CD4-positive, alpha-beta T cell (primary cell): ENCODE measurements at regions of chr2 and their contacts with region 1.

Region 1: DNA sequence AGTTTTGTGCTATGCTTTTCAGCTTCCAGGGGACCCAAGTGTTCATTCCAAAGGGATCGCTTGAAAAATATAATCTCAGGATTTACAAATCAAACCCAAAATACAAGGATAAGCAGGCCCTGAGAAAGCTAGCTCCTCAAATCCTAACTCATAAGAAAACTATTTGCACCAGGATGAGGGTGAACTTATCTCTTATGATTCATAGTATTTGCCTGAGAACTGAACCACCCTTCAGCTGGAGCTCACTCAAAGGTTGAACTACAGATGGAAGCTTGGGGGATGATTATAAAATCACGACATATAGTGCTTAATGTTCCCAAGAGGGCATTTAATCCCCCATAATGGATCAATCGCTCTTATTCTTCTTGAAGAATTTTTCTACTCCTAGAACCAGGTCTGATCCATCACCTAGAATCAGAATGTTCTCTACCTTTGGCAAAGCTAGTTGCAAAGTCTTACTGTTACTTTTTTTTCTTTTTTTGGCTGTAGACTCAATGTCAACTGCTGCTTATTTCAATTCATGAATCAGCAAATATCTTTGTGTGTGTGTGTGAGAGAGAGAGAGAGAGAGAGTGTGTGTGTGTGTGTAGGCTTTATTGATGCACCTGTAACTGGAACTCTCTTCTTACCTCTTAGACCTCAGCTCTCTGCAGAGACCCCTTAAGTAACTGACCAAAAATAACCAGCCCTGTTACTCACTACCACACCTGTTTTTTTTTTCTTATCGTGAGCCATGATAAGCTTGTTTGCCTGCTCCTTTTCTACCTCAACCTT is 44.8 kb downstream of the ARL4C start:
- DNase-seq: peak in 4 of 14 experiments; percentile 20 to 64 (median 54)
- ATAC-seq: peak; percentile 10
- H3K4me3 ChIP-seq: peak overlapping the region; percentile 64
- H3K4me3 Mint-ChIP-seq: peak overlapping the region; percentile 89
- H3K27ac ChIP-seq: peak overlapping the region; percentile 56 to 93
- H3K27ac Mint-ChIP-seq: peak overlapping the region; percentile 92
- H3K4me1 ChIP-seq: peaks cover 73% of the 10 kb centered on the region
- H3K4me1 Mint-ChIP-seq: peaks cover 89% of the 10 kb centered on the region
- H3K27me3 ChIP-seq: no peaks in the 10 kb centered on the region
- H3K27me3 Mint-ChIP-seq: peaks cover 5% of the 10 kb centered on the region
- CTCF ChIP-seq: no peak

Region 2: GRCh38 chr2:234368861-234369261 is 83.2 kb before region 1 on chr2:
- CTCF ChIA-PET with region 1: interaction called, 5 read pairs
- POLR2A ChIA-PET with region 1: interaction called, 12 read pairs
- intact Hi-C with region 1: loop called in 1 of 2 experiments (anchors 5 kb)
- DNase-seq: peak in 13 of 14 experiments; percentile 23 to 74 (median 50)
- ATAC-seq: peak; percentile 82
- H3K4me3 ChIP-seq: no peak overlapping the region
- H3K4me3 Mint-ChIP-seq: peak overlapping the region; percentile 50
- H3K27ac ChIP-seq: peak overlapping the region; percentile 47 to 57
- H3K27ac Mint-ChIP-seq: peak overlapping the region; percentile 88
- H3K4me1 ChIP-seq: peaks cover 65% of the 10 kb centered on the region
- H3K4me1 Mint-ChIP-seq: peaks cover 78% of the 10 kb centered on the region
- H3K27me3 ChIP-seq: no peaks in the 10 kb centered on the region
- H3K27me3 Mint-ChIP-seq: no peaks in the 10 kb centered on the region
- CTCF ChIP-seq: no peak

Region 3: DNA sequence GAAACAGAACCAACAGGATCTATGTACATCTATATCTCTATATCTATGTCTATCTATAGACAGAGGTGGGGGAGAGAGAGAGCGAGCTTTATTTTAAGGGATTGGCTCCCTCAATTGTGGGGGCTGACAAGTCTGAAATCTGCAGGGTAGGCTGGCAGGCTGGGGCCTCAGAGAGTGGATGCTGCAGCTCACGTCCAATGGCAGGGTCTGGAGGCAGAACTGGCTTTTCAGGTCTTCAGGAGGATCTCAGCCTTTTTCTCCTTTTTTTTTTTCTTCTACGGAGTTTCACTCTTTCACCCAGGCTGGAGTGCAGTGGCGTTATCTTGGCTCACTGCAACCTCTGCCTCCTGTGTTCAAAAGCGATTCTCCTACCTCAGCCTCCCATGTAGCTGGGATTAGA is 32.3 kb before region 1 on chr2:
- CTCF ChIA-PET with region 1: interaction called, 9 read pairs
- POLR2A ChIA-PET with region 1: interaction called, 376 read pairs
- intact Hi-C with region 1: loop called in 1 of 2 experiments (anchors 5 kb)
- DNase-seq: no peak
- ATAC-seq: no peak
- H3K4me3 ChIP-seq: no peak overlapping the region
- H3K4me3 Mint-ChIP-seq: no peak overlapping the region
- H3K27ac ChIP-seq: peak overlapping the region; percentile 32 to 33
- H3K27ac Mint-ChIP-seq: peak overlapping the region; percentile 97
- H3K4me1 ChIP-seq: peaks cover 58% of the 10 kb centered on the region
- H3K4me1 Mint-ChIP-seq: peaks cover 83% of the 10 kb centered on the region
- H3K27me3 ChIP-seq: no peaks in the 10 kb centered on the region
- H3K27me3 Mint-ChIP-seq: no peaks in the 10 kb centered on the region
- CTCF ChIP-seq: no peak

Region 4: DNA sequence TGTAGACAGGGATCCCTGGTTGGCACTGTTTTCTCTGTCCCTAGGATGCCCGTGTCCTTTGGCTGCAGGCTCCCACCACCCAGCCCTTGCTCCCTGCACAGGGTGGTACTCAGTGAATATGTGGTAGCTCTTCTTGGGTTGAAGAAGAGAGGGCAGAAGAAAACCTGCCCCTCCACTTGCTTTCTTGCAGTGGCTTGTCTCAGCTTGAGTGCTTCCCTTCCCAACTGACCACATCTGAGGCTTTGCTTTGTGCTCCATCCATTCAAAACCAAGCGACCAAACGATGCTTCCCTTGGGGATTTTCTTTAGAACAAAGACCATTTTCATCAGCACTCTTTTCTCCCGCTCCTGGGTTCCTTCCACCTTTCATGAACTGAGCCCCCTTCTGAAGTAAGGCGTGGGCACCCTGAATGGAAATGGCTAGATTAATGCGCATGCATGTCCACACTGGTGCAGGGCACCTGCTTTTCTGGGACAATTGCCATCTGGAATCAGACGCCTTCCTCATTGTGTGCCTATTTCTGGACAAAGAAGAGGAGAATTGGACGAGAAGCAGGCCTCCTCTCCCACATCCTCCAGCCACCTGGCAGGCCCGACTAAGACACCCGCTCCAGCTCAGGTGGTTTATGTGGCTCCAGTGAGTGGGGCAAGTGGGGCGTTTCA is 14.3 kb before region 1 on chr2:
- CTCF ChIA-PET with region 1: interaction called, 4 read pairs
- POLR2A ChIA-PET with region 1: interaction called, 42 read pairs
- intact Hi-C with region 1: no loop called
- DNase-seq: no peak
- ATAC-seq: peak; percentile 30
- H3K4me3 ChIP-seq: peak overlapping the region; percentile 6
- H3K4me3 Mint-ChIP-seq: peak overlapping the region; percentile 45
- H3K27ac ChIP-seq: peak overlapping the region; percentile 70 to 73
- H3K27ac Mint-ChIP-seq: peak overlapping the region; percentile 87
- H3K4me1 ChIP-seq: peaks cover 69% of the 10 kb centered on the region
- H3K4me1 Mint-ChIP-seq: peaks cover 89% of the 10 kb centered on the region
- H3K27me3 ChIP-seq: no peaks in the 10 kb centered on the region
- H3K27me3 Mint-ChIP-seq: no peaks in the 10 kb centered on the region
- CTCF ChIP-seq: no peak

Region 5: GRCh38 chr2:234478121-234478858 is 26.3 kb after region 1 on chr2:
- CTCF ChIA-PET with region 1: interaction called, 5 read pairs
- POLR2A ChIA-PET with region 1: interaction called, 64 read pairs
- intact Hi-C with region 1: no loop called
- DNase-seq: peak in 2 of 14 experiments; percentile 15 to 45
- ATAC-seq: peak; percentile 19
- H3K4me3 ChIP-seq: no peak overlapping the region
- H3K4me3 Mint-ChIP-seq: no peak overlapping the region
- H3K27ac ChIP-seq: no peak overlapping the region
- H3K27ac Mint-ChIP-seq: no peak overlapping the region
- H3K4me1 ChIP-seq: peaks cover 44% of the 10 kb centered on the region
- H3K4me1 Mint-ChIP-seq: peaks cover 74% of the 10 kb centered on the region
- H3K27me3 ChIP-seq: no peaks in the 10 kb centered on the region
- H3K27me3 Mint-ChIP-seq: no peaks in the 10 kb centered on the region
- CTCF ChIP-seq: no peak

Region 6: DNA sequence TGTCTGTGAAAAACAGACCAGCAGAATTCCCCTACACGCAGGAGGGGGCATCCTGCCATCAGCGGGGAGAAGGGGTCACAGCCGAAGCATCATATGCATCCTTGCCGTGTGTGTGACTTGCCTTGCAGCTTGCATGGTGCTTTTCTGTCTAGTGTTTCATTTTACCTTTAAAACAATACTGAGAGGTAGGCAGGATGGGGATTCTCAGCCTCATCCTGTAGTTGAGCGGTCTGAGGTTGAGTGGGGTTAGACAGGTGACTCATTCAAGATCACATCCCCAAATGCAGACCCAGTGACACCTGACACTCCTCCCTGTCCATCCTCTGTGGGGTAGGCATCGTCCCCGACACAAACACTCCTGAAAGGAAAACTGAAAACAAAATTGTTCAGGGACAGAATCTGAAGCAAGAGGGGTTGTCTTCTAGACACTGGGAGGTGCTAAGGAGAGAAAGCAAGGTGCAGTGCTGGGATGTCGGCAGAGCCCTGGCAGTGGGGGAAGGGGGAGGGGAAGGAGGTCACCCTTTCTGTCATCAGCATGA is 36.9 kb after region 1 on chr2:
- CTCF ChIA-PET with region 1: interaction called, 5 read pairs
- POLR2A ChIA-PET with region 1: interaction called, 265 read pairs
- intact Hi-C with region 1: loop called (anchors 1 to 2 kb)
- DNase-seq: peak; percentile 55 to 94 (median 69)
- ATAC-seq: peak; percentile 69
- H3K4me3 ChIP-seq: peak overlapping the region; percentile 94
- H3K4me3 Mint-ChIP-seq: peak overlapping the region; percentile 82
- H3K27ac ChIP-seq: peak overlapping the region; percentile 70 to 96
- H3K27ac Mint-ChIP-seq: peak overlapping the region; percentile 98
- H3K4me1 ChIP-seq: peaks cover 75% of the 10 kb centered on the region
- H3K4me1 Mint-ChIP-seq: peaks cover 92% of the 10 kb centered on the region
- H3K27me3 ChIP-seq: no peaks in the 10 kb centered on the region
- H3K27me3 Mint-ChIP-seq: no peaks in the 10 kb centered on the region
- CTCF ChIP-seq: no peak

Region 7: DNA sequence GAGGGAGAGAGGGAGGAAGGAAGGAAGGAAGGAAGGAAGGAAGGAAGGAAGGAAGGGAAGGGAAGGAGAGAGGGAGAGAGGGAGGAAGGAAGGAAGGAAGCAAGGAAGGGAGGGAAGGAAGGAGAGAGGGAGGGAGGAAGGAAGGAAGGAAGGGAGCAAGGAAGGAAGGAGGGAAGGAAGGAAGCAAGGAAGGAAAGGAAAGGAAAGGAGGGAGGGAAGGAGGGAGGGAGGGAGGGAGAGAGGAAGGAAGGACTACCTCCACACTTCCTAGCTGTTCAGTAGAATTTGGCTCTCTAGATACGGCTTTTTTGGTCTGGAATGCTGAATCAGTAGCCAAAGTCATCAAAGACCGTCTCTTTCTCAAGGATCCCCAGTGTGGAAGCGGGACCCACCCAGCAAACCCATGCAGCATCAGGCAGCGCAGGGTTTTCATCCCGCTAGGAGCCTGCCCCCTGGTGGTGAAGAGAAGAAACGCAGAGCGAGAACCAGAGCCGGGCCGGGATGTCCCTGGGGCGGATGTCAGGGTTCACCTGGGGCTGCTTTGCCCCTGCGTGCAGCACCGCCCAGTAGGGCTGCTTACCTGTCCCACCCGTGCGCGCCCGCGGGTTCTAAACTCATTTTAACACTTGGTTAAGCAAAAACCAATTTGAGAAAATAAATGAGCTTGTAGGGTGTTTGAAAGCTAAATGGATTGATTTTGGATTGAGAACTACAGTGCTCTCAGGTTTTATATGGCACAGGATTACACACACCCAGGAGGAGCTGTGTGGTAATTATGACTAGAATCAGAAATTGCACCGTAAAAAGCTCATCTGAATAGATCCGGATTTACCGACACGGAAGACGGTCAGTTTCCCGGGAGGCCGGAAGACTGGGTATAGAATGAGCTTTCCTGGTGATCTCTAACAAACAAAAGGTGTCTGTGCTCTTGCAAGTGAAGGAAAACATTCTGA is 92.9 kb after region 1 on chr2:
- CTCF ChIA-PET with region 1: no interaction called
- POLR2A ChIA-PET with region 1: no interaction called
- intact Hi-C with region 1: no loop called
- DNase-seq: peak; percentile 59 to 86 (median 70)
- ATAC-seq: peak; percentile 93
- H3K4me3 ChIP-seq: no peak overlapping the region
- H3K4me3 Mint-ChIP-seq: no peak overlapping the region
- H3K27ac ChIP-seq: no peak overlapping the region
- H3K27ac Mint-ChIP-seq: no peak overlapping the region
- H3K4me1 ChIP-seq: peaks cover 6% of the 10 kb centered on the region
- H3K4me1 Mint-ChIP-seq: no peaks in the 10 kb centered on the region
- H3K27me3 ChIP-seq: peaks cover 0 to 5% of the 10 kb centered on the region in 2 experiments
- H3K27me3 Mint-ChIP-seq: peaks cover 38% of the 10 kb centered on the region
- CTCF ChIP-seq: peak; percentile 93

Region 8: GRCh38 chr2:234661175-234661574 is 209.1 kb after region 1 on chr2:
- CTCF ChIA-PET with region 1: no interaction called
- POLR2A ChIA-PET with region 1: no interaction called
- intact Hi-C with region 1: no loop called
- DNase-seq: no peak
- ATAC-seq: no peak
- H3K4me3 ChIP-seq: no peak overlapping the region
- H3K4me3 Mint-ChIP-seq: no peak overlapping the region
- H3K27ac ChIP-seq: no peak overlapping the region
- H3K27ac Mint-ChIP-seq: no peak overlapping the region
- H3K4me1 ChIP-seq: no peaks in the 10 kb centered on the region
- H3K4me1 Mint-ChIP-seq: no peaks in the 10 kb centered on the region
- H3K27me3 ChIP-seq: no peaks in the 10 kb centered on the region
- H3K27me3 Mint-ChIP-seq: no peaks in the 10 kb centered on the region
- CTCF ChIP-seq: no peak